Activated CD8-positive, alpha-beta memory T cell treated with anti-CD3 and anti-CD28 coated beads, Interleukin-2, amount 10 ng/mL, durations not matched to agents 7 days and 5 days (primary cell): ENCODE measurements at regions of chr3 and their contacts with region 1.

Region 1: DNA sequence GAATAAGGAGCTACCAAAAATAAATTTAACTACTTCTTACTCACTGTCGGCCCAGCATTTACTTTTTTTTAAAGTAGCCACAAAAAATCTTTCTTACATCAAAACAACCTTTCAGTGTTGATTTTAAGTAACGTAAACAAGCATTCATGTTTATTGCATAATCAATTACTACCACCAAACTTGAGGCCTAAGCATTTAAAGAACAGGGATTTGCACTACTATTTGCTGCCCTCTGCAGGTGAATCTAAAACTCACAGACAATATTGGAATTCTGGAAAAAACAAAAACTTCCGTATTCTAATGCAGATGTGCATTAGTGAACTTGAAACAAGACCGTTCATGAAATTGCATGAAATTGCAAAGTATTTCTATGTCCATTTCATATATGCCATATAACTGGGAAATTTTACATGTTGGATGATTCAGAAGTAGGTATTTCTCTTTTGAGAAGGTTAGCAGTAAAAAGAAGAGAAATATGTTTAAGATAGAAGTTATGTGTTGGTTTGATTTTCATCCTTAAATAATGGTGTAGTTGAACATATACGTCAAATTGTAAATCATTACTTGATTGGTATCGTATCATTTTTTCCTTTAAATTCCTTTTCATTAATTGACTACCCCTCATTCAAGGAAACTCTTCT is 55.6 kb downstream of the CGGBP1 start:
- DNase-seq: no peak
- ATAC-seq: no peak
- H3K4me3 Mint-ChIP-seq: no peak overlapping the region
- H3K27ac Mint-ChIP-seq: no peak overlapping the region
- H3K4me1 Mint-ChIP-seq: peaks cover 16% of the 10 kb centered on the region
- H3K27me3 Mint-ChIP-seq: peaks cover 5% of the 10 kb centered on the region

Region 2: GRCh38 chr3:87350364-87351199 is 652.7 kb before region 1 on chr3:
- CTCF ChIA-PET with region 1: interaction called, 15 read pairs
- DNase-seq: no peak
- ATAC-seq: peak; percentile 92
- H3K4me3 Mint-ChIP-seq: no peak overlapping the region
- H3K27ac Mint-ChIP-seq: no peak overlapping the region
- H3K4me1 Mint-ChIP-seq: no peaks in the 10 kb centered on the region
- H3K27me3 Mint-ChIP-seq: peaks cover 17% of the 10 kb centered on the region

Region 3: DNA sequence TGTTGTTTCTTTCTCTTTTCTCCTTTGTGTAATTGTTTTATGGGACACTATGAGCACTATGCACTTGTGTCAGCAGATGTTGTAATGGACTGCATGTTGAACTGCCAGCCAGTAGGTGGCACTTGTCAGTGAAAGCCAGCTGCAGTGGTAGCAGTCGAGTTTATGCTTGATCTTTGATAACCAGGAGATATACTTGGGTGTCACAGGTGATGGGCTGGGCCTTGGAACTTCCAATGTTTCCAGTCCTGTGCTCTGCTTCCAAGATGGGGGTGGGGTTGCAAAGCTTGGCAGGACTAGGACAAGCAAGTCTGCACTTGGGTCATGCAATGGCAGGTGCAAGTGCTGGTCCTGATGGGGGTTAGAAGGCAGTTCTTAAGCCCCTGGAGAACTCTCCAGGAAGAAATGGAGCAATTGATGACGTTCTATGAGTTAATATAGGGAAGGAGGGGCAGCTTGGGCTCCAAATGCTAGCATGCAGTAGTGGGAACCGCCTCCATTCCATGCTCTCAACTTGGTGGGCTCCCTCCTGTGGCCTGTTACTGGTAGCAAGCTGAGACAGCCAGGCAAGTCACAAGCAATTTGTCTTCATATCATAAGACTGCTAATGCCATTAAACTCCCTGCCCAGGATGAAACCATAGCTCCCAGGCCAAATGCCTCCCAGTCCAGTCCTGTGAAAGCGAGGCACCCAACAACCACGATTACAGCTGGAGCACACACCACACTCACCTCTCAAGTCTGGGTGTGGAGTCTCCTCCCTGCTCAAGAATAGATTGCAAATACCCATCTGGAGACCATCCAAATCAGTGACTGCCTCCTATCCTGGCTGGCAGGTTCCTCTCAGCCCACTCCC is 231.7 kb before region 1 on chr3:
- CTCF ChIA-PET with region 1: interaction called, 20 read pairs
- DNase-seq: peak; percentile 51
- ATAC-seq: peak; percentile 76
- H3K4me3 Mint-ChIP-seq: no peak overlapping the region
- H3K27ac Mint-ChIP-seq: no peak overlapping the region
- H3K4me1 Mint-ChIP-seq: no peaks in the 10 kb centered on the region
- H3K27me3 Mint-ChIP-seq: peaks cover 22% of the 10 kb centered on the region

Region 4: DNA sequence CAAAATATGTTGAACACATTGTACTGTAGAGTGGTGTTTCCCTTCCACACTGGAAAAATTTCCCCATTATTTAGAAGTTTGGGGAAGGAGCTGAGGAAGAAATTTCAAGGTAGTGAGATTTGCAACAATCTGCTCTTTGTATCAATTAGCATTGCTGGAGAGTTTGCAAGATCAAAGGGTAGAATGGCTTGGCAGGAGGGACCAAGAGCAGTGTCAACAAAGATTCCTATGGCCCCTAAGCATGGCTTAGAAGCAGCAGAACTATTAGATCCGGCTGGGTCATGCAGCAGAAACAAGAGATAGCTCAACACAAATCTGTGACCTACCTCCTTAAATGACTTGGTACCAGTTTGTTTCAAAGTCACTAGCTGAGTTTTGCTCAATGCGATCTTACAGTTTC is 321.6 kb after region 1 on chr3:
- CTCF ChIA-PET with region 1: no interaction called
- DNase-seq: no peak
- ATAC-seq: no peak
- H3K4me3 Mint-ChIP-seq: no peak overlapping the region
- H3K27ac Mint-ChIP-seq: no peak overlapping the region
- H3K4me1 Mint-ChIP-seq: no peaks in the 10 kb centered on the region
- H3K27me3 Mint-ChIP-seq: no peaks in the 10 kb centered on the region